Transverse colon (tissue), 4 donors: ENCODE measurements at regions of chr11 and their contacts with region 1.

Region 1: GRCh38 chr11:123033895-123034294 is 28.0 kb downstream of the HSPA8 start:
- DNase-seq: no peak
- H3K4me3 ChIP-seq: no peak overlapping the region
- H3K27ac ChIP-seq: no peak overlapping the region
- H3K4me1 ChIP-seq: no peaks in the 10 kb centered on the region
- H3K27me3 ChIP-seq: no peaks in the 10 kb centered on the region
- CTCF ChIP-seq: no peak
- EP300 ChIP-seq: no peak
- POLR2A ChIP-seq: no peak

Region 2: GRCh38 chr11:122601141-122602125 is 432.5 kb before region 1 on chr11:
- in situ Hi-C with region 1: loop called in 1 of 4 experiments (anchors 25 kb)
- intact Hi-C with region 1: no loop called
- DNase-seq: no peak
- H3K4me3 ChIP-seq: no peak overlapping the region
- H3K27ac ChIP-seq: no peak overlapping the region
- H3K4me1 ChIP-seq: no peaks in the 10 kb centered on the region
- H3K27me3 ChIP-seq: no peaks in the 10 kb centered on the region
- CTCF ChIP-seq: no peak
- EP300 ChIP-seq: no peak
- POLR2A ChIP-seq: no peak

Region 3: GRCh38 chr11:122863704-122864326 is 170.1 kb before region 1 on chr11:
- in situ Hi-C with region 1: loop called in 2 of 4 experiments (anchors 10 kb)
- intact Hi-C with region 1: no loop called
- DNase-seq: peak; percentile 47
- H3K4me3 ChIP-seq: no peak overlapping the region
- H3K27ac ChIP-seq: no peak overlapping the region
- H3K4me1 ChIP-seq: no peaks in the 10 kb centered on the region
- H3K27me3 ChIP-seq: peaks cover 19% of the 10 kb centered on the region
- CTCF ChIP-seq: peak; percentile 64 to 75 (median 73)
- EP300 ChIP-seq: no peak
- POLR2A ChIP-seq: no peak

Region 4: GRCh38 chr11:123316003-123316402 is 282.1 kb after region 1 on chr11:
- in situ Hi-C with region 1: no loop called
- intact Hi-C with region 1: no loop called
- DNase-seq: no peak
- H3K4me3 ChIP-seq: no peak overlapping the region
- H3K27ac ChIP-seq: no peak overlapping the region
- H3K4me1 ChIP-seq: no peaks in the 10 kb centered on the region
- H3K27me3 ChIP-seq: no peaks in the 10 kb centered on the region
- CTCF ChIP-seq: no peak
- EP300 ChIP-seq: no peak
- POLR2A ChIP-seq: no peak